ENCODE measurements at regions of chr10 and their contacts with region 1.

Region 1: GRCh38 chr10:78657163-78657861 is 411.5 kb upstream of the ZMIZ1 start:
- DNase-seq: peak; percentile 58
- ATAC-seq: peak; percentile 99
- H3K4me3 ChIP-seq: no peak overlapping the region
- H3K27ac ChIP-seq: no peak overlapping the region
- H3K4me1 ChIP-seq: no peaks in the 10 kb centered on the region
- H3K27me3 ChIP-seq: peaks cover 12% of the 10 kb centered on the region
- CTCF ChIP-seq: peak; percentile 94

Region 2: GRCh38 chr10:78211561-78212051 is 445.7 kb before region 1 on chr10:
- CTCF ChIA-PET with region 1: no interaction called
- POLR2A ChIA-PET with region 1: no interaction called
- in situ Hi-C with region 1: no loop called
- intact Hi-C with region 1: loop called (anchors 10 kb)
- DNase-seq: peak; percentile 25
- ATAC-seq: peak; percentile 67
- H3K4me3 ChIP-seq: no peak overlapping the region
- H3K27ac ChIP-seq: no peak overlapping the region
- H3K4me1 ChIP-seq: no peaks in the 10 kb centered on the region
- H3K27me3 ChIP-seq: peaks cover 2% of the 10 kb centered on the region; the same call in 1 of the 2 replicates
- CTCF ChIP-seq: no peak; the same call in 1 of the 2 replicates

Measured in Panc1 (cell line).